Panc1 (cell line): ENCODE measurements at regions of chr12 and their contacts with region 1.

Region 1: DNA sequence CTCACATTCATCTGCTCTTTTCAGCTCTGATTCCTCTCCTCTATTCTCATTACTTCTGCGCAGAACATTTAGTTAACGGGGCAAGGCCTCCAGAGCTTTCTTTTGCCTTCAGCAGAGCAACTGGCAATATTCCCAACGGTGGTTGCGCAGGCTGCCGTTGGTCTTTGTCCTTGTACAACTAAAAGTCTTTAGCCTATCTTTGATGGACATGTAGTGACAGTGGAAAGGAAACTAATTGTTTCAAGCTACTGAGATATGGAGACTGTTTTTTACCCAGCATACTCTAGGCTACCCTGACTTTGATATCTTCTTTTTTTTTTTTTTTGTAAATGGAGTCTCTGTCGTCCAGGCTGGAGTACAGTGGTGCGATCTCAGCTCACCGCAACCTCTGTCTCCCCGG is 12.6 kb downstream of the R3HDM2 start:
- DNase-seq: no peak
- ATAC-seq: no peak
- H3K4me3 ChIP-seq: no peak overlapping the region
- H3K27ac ChIP-seq: no peak overlapping the region
- H3K4me1 ChIP-seq: no peaks in the 10 kb centered on the region
- H3K27me3 ChIP-seq: no peaks in the 10 kb centered on the region
- CTCF ChIP-seq: no peak

Region 2: GRCh38 chr12:56792678-56793077 is 625.6 kb before region 1 on chr12:
- CTCF ChIA-PET with region 1: interaction called, 13 read pairs
- POLR2A ChIA-PET with region 1: no interaction called
- in situ Hi-C with region 1: no loop called
- intact Hi-C with region 1: no loop called
- DNase-seq: no peak
- ATAC-seq: no peak
- H3K4me3 ChIP-seq: no peak overlapping the region
- H3K27ac ChIP-seq: no peak overlapping the region
- H3K4me1 ChIP-seq: no peaks in the 10 kb centered on the region
- H3K27me3 ChIP-seq: no peaks in the 10 kb centered on the region
- CTCF ChIP-seq: no peak